H1 (cell line): ENCODE measurements at regions of chr6 and their contacts with region 1.

Region 1: GRCh38 chr6:35048631-35049083 is 92.5 kb downstream of the TCP11 start:
- DNase-seq: no peak
- H3K4me3 ChIP-seq: no peak overlapping the region; a peak in 2 of 8 replicates
- H3K27ac ChIP-seq: peak overlapping the region; percentile 96
- H3K4me1 ChIP-seq: peaks cover 21 to 52% (median 39%) of the 10 kb centered on the region in 4 experiments
- H3K27me3 ChIP-seq: no peaks in the 10 kb centered on the region
- CTCF ChIP-seq: peak; percentile 52 to 63 (median 55)
- EP300 ChIP-seq: no peak
- POLR2A ChIP-seq: no peak
- RAD21 ChIP-seq: peak; percentile 43 to 60

Region 2: GRCh38 chr6:35017411-35018181 is 31.1 kb before region 1 on chr6:
- CTCF ChIA-PET with region 1: interaction called, 12 read pairs
- POLR2A ChIA-PET with region 1: interaction called, 3 read pairs
- DNase-seq: no peak
- H3K4me3 ChIP-seq: no peak overlapping the region
- H3K27ac ChIP-seq: no peak overlapping the region
- H3K4me1 ChIP-seq: peaks cover 2 to 13% (median 9%) of the 10 kb centered on the region in 4 experiments; a peak in 6 of 7 replicates
- H3K27me3 ChIP-seq: no peaks in the 10 kb centered on the region
- CTCF ChIP-seq: no peak
- EP300 ChIP-seq: no peak
- POLR2A ChIP-seq: no peak
- RAD21 ChIP-seq: no peak

Region 3: GRCh38 chr6:35025232-35026178 is 23.2 kb before region 1 on chr6:
- CTCF ChIA-PET with region 1: interaction called, 15 read pairs
- POLR2A ChIA-PET with region 1: interaction called, 11 read pairs
- DNase-seq: no peak
- H3K4me3 ChIP-seq: peak overlapping the region in 1 of 4 experiments; percentile 18; a peak in 1 of 8 replicates
- H3K27ac ChIP-seq: no peak overlapping the region
- H3K4me1 ChIP-seq: peaks cover 6 to 40% (median 30%) of the 10 kb centered on the region in 4 experiments
- H3K27me3 ChIP-seq: no peaks in the 10 kb centered on the region
- CTCF ChIP-seq: peak; percentile 50 to 55 (median 50)
- EP300 ChIP-seq: no peak
- POLR2A ChIP-seq: no peak
- RAD21 ChIP-seq: peak; percentile 34 to 58; a peak in 2 of 4 replicates

Region 4: GRCh38 chr6:35034411-35035191 is 14.1 kb before region 1 on chr6:
- CTCF ChIA-PET with region 1: interaction called, 5 read pairs
- POLR2A ChIA-PET with region 1: interaction called, 18 read pairs
- DNase-seq: no peak
- H3K4me3 ChIP-seq: no peak overlapping the region
- H3K27ac ChIP-seq: no peak overlapping the region
- H3K4me1 ChIP-seq: peaks cover 19 to 34% (median 29%) of the 10 kb centered on the region in 4 experiments
- H3K27me3 ChIP-seq: no peaks in the 10 kb centered on the region; a peak in 2 of 7 replicates
- CTCF ChIP-seq: no peak
- EP300 ChIP-seq: no peak
- POLR2A ChIP-seq: no peak
- RAD21 ChIP-seq: no peak

Region 5: GRCh38 chr6:35064757-35065440 is 16.2 kb after region 1 on chr6:
- CTCF ChIA-PET with region 1: interaction called, 37 read pairs
- POLR2A ChIA-PET with region 1: interaction called, 4 read pairs
- DNase-seq: no peak
- H3K4me3 ChIP-seq: no peak overlapping the region
- H3K27ac ChIP-seq: 0 out of 2 replicates have a peak overlapping the region, but pooled peaks have one; percentile 34
- H3K4me1 ChIP-seq: peaks cover 0 to 16% (median 9%) of the 10 kb centered on the region in 4 experiments; a peak in 6 of 7 replicates
- H3K27me3 ChIP-seq: no peaks in the 10 kb centered on the region
- CTCF ChIP-seq: peak in 2 of 3 experiments; percentile 50 to 56; a peak in 3 of 4 replicates
- EP300 ChIP-seq: no peak
- POLR2A ChIP-seq: no peak
- RAD21 ChIP-seq: peak; percentile 52 to 63